Activated CD4-positive, alpha-beta T cell treated with anti-CD3 and anti-CD28 coated beads, Interleukin-2, amount 10 ng/mL, durations not matched to agents 24 days and 14 days (primary cell): ENCODE measurements at regions of chr13 and their contacts with region 1.

Region 1: DNA sequence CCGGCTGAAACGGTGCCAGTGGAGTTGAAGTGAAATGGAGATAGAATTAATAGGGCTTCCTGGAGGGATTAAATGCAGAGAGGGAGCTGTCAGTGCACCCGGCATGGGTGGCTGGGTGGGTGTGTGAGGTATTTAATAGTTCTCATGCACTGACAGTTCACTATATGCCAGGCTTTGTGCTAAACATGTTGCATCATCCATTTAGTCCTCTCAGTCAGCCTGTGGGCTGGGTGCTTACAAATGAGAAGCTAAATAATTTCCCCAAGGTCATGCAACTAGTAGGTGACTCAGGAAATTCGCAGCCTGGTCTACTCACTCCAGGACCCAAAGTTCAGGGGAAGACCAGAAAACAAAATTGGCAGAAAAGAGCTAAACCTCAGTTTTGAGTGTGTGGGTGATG is 63.5 kb upstream of the SPATA13 start:
- DNase-seq: peak; percentile 74
- H3K4me3 Mint-ChIP-seq: peak overlapping the region; percentile 71
- H3K27ac Mint-ChIP-seq: peak overlapping the region; percentile 92
- H3K4me1 Mint-ChIP-seq: peaks cover 17% of the 10 kb centered on the region
- H3K27me3 Mint-ChIP-seq: peaks cover 29% of the 10 kb centered on the region

Region 2: DNA sequence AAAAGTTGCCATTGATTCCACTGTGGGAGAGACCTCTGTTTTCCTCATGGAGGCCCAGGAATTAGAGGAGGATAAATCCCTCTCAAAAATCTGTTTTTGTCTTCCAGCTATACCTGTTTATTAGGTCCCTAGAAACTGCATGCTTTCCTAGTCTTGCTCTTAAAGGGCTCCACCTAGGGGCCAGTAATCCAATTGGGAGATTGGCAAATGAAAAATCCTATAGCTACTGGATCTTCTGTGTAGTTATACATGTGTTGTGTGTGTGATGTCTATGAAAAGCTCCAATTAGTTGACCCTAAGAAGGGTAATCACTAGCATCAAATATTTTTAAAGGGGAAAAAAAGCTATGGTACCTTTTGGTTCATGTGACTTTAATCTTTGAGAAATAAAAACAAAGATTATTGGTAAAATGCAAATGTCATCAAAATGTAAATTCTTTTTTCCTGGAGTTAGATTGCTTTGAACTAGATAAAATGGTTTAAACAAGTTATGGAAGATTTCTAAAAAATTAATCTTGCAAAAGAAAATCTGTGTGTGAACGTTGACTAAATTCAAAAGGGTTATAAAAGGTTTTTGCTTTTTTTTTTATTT is 136.4 kb before region 1 on chr13:
- intact Hi-C with region 1: loop called (anchors 5 kb)
- DNase-seq: peak; percentile 75
- H3K4me3 Mint-ChIP-seq: no peak overlapping the region
- H3K27ac Mint-ChIP-seq: no peak overlapping the region
- H3K4me1 Mint-ChIP-seq: peaks cover 38% of the 10 kb centered on the region
- H3K27me3 Mint-ChIP-seq: peaks cover 5% of the 10 kb centered on the region

Region 3: GRCh38 chr13:24122569-24122968 is 25.5 kb after region 1 on chr13:
- intact Hi-C with region 1: loop called (anchors 1 kb)
- DNase-seq: no peak
- H3K4me3 Mint-ChIP-seq: no peak overlapping the region
- H3K27ac Mint-ChIP-seq: no peak overlapping the region
- H3K4me1 Mint-ChIP-seq: peaks cover 37% of the 10 kb centered on the region
- H3K27me3 Mint-ChIP-seq: peaks cover 31% of the 10 kb centered on the region

Region 4: DNA sequence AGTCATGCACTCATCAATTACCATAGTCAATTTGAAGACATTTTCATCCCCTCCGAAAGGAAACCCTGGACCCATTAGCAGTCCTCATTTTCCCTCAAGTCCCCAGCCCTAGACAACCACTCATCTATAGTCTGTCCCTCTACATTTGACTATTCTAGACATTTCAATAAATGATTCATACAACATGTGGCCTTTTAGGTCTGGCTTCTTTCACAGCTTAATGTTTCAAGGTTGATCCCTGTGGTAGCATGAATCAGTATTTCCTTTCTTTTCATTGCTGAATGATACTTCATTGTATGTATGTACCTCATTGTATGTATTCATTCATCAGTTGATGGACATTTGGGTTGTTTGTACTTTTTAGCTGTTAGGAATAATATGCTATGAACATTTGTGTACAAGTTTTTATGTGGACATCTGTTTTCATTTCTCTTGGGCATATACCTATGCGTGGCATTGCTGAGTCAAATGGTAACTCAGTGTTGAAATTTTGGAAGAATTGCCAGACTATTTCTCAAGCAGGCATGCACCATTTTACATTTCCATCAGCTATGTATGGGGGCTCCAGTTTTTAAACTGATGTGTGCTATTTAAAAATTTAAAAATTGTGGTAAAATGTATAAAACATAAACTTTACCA is 81.9 kb after region 1 on chr13:
- intact Hi-C with region 1: loop called (anchors 2 kb)
- DNase-seq: no peak
- H3K4me3 Mint-ChIP-seq: no peak overlapping the region
- H3K27ac Mint-ChIP-seq: peak overlapping the region; percentile 25
- H3K4me1 Mint-ChIP-seq: peaks cover 29% of the 10 kb centered on the region
- H3K27me3 Mint-ChIP-seq: no peaks in the 10 kb centered on the region

Region 5: GRCh38 chr13:24220086-24220703 is 123.1 kb after region 1 on chr13:
- intact Hi-C with region 1: loop called (anchors 1 kb)
- DNase-seq: peak; percentile 90
- H3K4me3 Mint-ChIP-seq: no peak overlapping the region
- H3K27ac Mint-ChIP-seq: peak overlapping the region; percentile 5
- H3K4me1 Mint-ChIP-seq: peaks cover 37% of the 10 kb centered on the region
- H3K27me3 Mint-ChIP-seq: no peaks in the 10 kb centered on the region

Region 6: DNA sequence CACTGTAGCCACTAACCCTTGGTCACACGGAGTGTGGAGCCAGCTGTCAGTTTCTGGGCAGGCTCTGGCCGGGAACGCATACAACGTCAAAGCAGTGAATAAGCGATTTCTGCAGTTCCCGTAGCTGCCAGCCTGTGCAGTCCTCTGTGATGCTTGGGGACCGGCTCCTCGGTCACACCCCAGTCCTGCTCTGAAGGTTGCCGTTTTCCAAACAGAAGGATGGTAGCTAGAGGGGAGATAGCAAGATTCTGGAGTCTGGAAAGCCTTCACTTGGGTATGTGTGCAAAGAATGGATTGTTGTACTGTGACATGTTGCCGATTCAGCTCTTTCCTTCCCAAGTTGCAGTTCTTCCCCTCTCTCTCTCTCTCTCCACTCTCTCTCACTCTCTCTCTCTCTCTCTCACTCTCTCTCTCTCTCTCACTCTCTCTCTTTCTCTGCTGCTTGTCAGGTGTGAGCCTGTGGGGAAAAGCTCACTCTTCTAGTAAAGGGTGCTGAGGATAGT is 173.6 kb after region 1 on chr13:
- intact Hi-C with region 1: loop called (anchors 1 kb)
- DNase-seq: peak; percentile 89
- H3K4me3 Mint-ChIP-seq: peak overlapping the region; percentile 91
- H3K27ac Mint-ChIP-seq: peak overlapping the region; percentile 96
- H3K4me1 Mint-ChIP-seq: peaks cover 82% of the 10 kb centered on the region
- H3K27me3 Mint-ChIP-seq: peaks cover 2% of the 10 kb centered on the region